Adrenal gland (tissue), 19 donors: ENCODE measurements at regions of chr21 and their contacts with region 1.

Region 1: GRCh38 chr21:43939443-43940328 is 72.4 kb upstream of the TRAPPC10 start:
- DNase-seq: no peak
- H3K4me3 ChIP-seq: no peak overlapping the region
- H3K27ac ChIP-seq: no peak overlapping the region
- H3K4me1 ChIP-seq: peaks cover 0 to 12% of the 10 kb centered on the region in 2 donors
- H3K27me3 ChIP-seq: no peaks in the 10 kb centered on the region
- CTCF ChIP-seq: peak in 2 of 6 experiments; percentile 6 to 41
- POLR2A ChIP-seq: no peak

Region 2: DNA sequence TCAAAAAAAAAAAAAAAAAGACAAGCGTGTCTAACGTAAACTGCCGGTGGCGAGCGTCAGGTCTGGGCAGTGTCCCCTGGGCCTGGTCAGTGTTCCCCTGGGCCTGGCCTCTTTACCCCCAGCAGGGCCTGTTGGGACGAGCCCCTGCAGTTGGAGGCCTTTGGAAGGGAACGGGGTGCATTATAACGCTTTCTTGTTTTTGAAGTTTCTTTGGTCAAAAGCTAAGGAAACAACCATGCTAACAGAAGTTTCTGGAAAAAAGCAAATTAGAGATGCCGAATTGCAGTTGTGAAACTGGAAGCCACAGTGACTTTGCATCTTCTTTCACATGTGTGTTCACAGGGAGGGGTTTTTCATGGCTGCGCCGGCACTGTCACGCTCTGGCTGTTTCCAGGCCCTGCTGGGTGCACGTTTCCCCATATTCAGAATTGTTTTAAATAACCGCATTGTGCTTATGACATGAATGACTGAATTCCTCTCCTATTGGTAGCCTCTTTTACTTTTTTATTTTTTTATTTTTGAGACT is 134.3 kb before region 1 on chr21:
- intact Hi-C with region 1: loop called in 1 of 2 experiments (anchors 10 kb)
- DNase-seq: no peak
- H3K4me3 ChIP-seq: no peak overlapping the region
- H3K27ac ChIP-seq: no peak overlapping the region
- H3K4me1 ChIP-seq: no peaks in the 10 kb centered on the region
- H3K27me3 ChIP-seq: no peaks in the 10 kb centered on the region
- CTCF ChIP-seq: no peak
- POLR2A ChIP-seq: no peak

Region 3: DNA sequence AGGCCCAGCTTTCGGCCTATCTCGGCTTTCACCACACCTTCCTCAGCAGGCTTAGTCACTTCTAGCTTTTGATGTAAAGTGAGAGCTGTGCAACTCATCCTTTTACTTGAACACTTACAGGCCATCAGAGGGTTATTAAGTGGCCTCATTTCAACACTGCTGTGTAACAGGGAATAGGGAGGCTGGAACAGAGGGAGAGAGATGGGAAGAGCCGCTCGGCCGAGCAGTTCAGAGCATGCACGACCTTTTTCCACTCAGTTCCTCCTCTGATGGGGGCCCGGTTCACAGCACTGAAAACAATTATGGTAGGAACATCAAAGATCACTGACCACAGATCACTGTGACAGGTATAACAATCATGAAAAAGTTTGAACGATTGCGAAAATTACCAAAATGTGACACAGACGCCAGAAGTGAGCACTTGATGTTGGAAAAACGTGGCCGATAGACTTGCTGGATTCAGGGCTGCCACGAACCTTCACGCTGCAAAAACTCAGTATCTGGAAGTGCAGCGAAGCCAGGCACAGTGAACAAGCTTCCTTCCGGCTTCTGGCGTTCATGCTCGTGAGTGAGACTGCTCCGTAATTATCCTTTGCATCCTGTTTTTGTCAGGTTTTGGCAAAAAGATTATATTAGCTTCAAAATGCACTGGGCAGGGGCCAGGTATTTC is 46.0 kb before region 1 on chr21:
- intact Hi-C with region 1: loop called in 1 of 2 experiments (anchors 10 kb)
- DNase-seq: peak in 2 of 7 donors; percentile 27 to 53
- H3K4me3 ChIP-seq: no peak overlapping the region
- H3K27ac ChIP-seq: peak overlapping the region in 1 of 5 donors; percentile 20
- H3K4me1 ChIP-seq: peaks cover 0 to 12% of the 10 kb centered on the region in 2 donors
- H3K27me3 ChIP-seq: no peaks in the 10 kb centered on the region
- CTCF ChIP-seq: no peak
- POLR2A ChIP-seq: no peak